BJ (cell line): ENCODE measurements at regions of chr2 and their contacts with region 1.

Region 1: DNA sequence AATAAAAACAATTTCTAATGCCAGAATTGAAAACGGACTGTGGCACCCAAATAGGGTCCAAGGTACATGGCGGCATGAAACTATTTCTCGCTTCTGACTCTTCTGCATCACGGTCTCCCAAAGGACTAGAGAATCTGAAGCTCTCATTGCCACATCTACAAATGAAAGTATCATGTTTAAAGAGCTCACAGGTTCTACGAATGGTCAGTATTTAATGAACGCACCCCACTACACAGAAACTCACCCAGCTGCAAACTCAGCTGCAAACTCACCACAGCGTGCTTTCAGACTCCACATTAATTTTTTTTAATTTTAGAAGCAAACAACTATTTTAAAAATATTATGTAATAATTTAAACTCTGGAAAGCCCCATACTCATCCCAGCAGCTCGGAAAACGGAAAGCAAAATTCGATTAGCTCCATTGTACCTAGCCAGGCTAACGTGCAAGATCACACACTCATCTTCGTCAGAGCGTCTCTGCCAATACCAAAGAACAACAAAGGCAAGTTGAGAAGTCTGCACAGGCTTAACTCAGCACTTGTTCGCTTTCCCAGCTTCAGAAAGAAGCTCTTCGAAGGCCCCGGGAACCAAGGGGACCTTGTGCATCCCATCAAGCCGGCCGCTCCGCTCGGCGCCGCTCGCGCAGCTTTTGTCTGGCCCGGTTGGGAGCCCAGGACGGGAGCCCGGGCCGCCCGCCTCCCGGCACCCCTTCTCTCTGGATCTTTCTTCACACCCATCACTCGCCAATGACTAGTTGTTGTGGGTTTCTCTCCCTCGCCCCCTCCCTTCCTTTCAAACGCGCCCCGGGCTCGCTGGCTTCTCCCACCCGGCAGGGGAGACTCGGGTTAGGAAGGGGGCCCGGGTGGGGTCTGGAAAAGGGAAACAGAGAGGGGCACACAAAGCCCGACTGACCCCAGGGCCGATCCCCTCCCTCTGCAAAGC is 785 bp downstream of the CLASP1 start:
- DNase-seq: no peak
- H3K4me3 ChIP-seq: peak overlapping the region; percentile 91
- H3K27me3 ChIP-seq: no peaks in the 10 kb centered on the region
- CTCF ChIP-seq: no peak

Region 2: DNA sequence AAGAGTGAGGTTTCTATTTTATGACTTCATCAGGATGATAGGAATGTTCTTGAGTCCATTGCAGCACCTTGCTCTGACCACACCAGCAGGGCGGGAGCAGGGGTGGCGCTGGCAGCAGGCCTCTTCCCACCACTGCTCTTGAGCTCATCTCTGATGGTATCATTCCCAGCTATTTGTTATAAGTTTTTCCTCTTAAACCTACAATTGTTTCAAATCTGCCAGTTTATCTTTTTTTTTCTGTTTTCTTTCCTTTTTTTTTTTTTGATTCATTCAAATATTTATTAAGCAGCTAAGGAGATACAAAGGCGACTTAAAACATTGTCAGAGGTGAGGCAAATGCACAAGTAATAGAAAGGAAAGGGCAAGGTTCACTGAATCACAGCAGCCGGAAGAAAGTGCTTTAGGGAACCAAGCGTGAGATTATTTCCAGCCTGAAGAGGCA is 59.5 kb after region 1 on chr2:
- CTCF ChIA-PET with region 1: no interaction called
- POLR2A ChIA-PET with region 1: interaction called, 12 read pairs
- DNase-seq: no peak
- H3K4me3 ChIP-seq: no peak overlapping the region
- H3K27me3 ChIP-seq: no peaks in the 10 kb centered on the region
- CTCF ChIP-seq: no peak